Left colon (tissue), 2 donors: ENCODE measurements at regions of chrX and their contacts with region 1.

Region 1: GRCh38 chrX:153763989-153764755 is at the start of gene PLXNB3:
- DNase-seq: peak; percentile 79 to 88
- ATAC-seq: peak; percentile 94
- total RNA-seq, gene PLXNB3: 1.0 to 5.4 TPM

Region 2: DNA sequence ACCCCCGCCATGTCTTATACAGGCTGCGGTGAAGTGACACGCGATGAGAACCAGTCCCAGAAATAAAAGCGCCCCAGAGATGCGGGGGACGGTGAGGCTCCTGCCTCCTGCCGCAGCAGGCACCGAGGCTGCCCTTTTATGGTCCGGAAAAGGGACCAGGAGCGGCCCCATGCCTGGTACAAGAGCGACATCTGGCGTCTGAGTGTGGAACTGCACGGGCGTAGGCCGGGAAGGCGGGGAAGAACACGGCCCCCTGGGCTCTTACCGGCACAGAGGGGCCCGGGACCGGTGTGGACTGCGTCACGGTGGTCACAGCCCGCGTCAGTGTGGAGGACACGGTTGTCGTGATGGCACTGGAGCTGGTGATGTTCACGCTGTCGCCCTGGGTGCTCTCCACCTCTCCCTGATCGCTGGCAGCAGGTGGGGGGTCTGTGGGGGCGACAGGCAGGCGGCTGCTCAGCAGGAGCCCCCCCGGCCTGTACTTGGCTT is 189.2 kb after region 1 on chrX:
- intact Hi-C with region 1: loop called in 1 of 2 experiments (anchors 5 kb)
- DNase-seq: peak; percentile 68 to 82
- ATAC-seq: peak; percentile 78